Activated CD8-positive, alpha-beta T cell treated with anti-CD3 and anti-CD28 coated beads, Interleukin-2, amount 10 ng/mL, durations not matched to agents 7 days and 5 days (primary cell): ENCODE measurements at regions of chr20 and their contacts with region 1.

Region 1: GRCh38 chr20:1509237-1509636 is 18.0 kb upstream of the SIRPB2 start:
- DNase-seq: peak; percentile 62
- ATAC-seq: peak; percentile 51
- H3K4me3 Mint-ChIP-seq: no peak overlapping the region
- H3K27ac Mint-ChIP-seq: no peak overlapping the region
- H3K4me1 Mint-ChIP-seq: no peaks in the 10 kb centered on the region
- H3K27me3 Mint-ChIP-seq: peaks cover 32% of the 10 kb centered on the region

Region 2: GRCh38 chr20:1524004-1524403 is 14.8 kb after region 1 on chr20:
- CTCF ChIA-PET with region 1: interaction called, 14 read pairs
- POLR2A ChIA-PET with region 1: interaction called, 3 read pairs
- DNase-seq: no peak
- ATAC-seq: no peak
- H3K4me3 Mint-ChIP-seq: no peak overlapping the region
- H3K27ac Mint-ChIP-seq: no peak overlapping the region
- H3K4me1 Mint-ChIP-seq: no peaks in the 10 kb centered on the region
- H3K27me3 Mint-ChIP-seq: peaks cover 21% of the 10 kb centered on the region

Region 3: DNA sequence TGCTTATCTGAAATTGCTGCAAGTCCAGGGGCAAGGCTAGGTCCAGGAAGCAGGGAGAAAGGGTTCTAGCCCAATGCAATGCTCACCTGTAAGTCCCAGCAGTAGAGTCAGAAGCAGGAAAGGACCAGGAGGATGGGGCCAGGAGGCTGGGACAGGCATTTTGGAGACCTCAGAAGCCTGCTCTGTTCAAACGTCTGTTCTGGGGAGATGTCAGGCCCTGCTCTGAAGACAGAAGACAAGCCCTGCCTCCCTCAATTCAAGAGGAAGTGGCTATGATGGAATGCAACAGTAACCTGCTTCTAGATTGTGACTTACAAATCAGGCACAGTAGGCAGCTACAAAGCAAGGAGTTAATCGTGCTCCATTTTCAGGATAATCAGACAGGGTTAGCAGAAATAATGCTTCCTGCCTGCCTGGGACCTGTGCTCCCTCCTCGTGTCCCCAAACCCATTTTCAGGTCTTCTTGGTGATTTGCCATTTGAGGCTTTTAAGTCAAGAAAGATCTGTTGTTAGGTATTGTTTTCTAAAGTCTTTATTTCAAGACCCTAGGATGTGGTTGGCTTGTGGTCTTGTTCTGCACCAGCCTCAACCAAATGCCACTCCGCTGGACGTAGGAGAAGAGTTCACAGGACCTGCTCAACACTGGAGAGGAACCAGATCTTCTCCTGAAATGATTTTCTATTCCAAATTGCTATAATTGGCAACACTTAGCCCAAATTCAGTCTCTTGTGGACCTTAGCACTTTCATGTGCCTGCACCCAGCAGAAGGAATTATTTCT is 148.5 kb after region 1 on chr20 and contains the start of gene SIRPG:
- CTCF ChIA-PET with region 1: no interaction called
- POLR2A ChIA-PET with region 1: no interaction called
- DNase-seq: peak; percentile 77
- ATAC-seq: peak; percentile 66
- H3K4me3 Mint-ChIP-seq: peak within 1 kb of the TSS; percentile 93
- H3K27ac Mint-ChIP-seq: peak within 1 kb of the TSS; percentile 95
- H3K4me1 Mint-ChIP-seq: peaks cover 82% of the 10 kb centered on the region
- H3K27me3 Mint-ChIP-seq: no peaks in the 10 kb centered on the region
- total RNA-seq, gene SIRPG: 112 to 123 TPM